ENCODE measurements at regions of chr11 and their contacts with region 1.

Region 1: GRCh38 chr11:125874556-125875124 is 12.8 kb upstream of the HYLS1 start:
- DNase-seq: peak; percentile 47 to 77 (median 62)
- H3K4me3 ChIP-seq: no peak overlapping the region
- H3K27ac ChIP-seq: no peak overlapping the region
- H3K4me1 ChIP-seq: no peaks in the 10 kb centered on the region
- H3K27me3 ChIP-seq: no peaks in the 10 kb centered on the region
- CTCF ChIP-seq: peak; percentile 60 to 82 (median 72)
- POLR2A ChIP-seq: no peak

Region 2: GRCh38 chr11:125625630-125626287 is 248.9 kb before region 1 on chr11:
- intact Hi-C with region 1: loop called (anchors 10 kb)
- DNase-seq: peak; percentile 85 to 92 (median 87)
- H3K4me3 ChIP-seq: peak overlapping the region; percentile 13 to 62 (median 46)
- H3K27ac ChIP-seq: peak overlapping the region; percentile 57 to 93 (median 88)
- H3K4me1 ChIP-seq: peaks cover 6 to 18% of the 10 kb centered on the region in 2 donors
- H3K27me3 ChIP-seq: no peaks in the 10 kb centered on the region
- CTCF ChIP-seq: no peak
- POLR2A ChIP-seq: peak; percentile 26 to 70

Measured in adrenal gland (tissue), 19 donors.